ENCODE measurements at regions of chr10 and their contacts with region 1.

Region 1: GRCh38 chr10:119686439-119687191 is 35.4 kb downstream of the BAG3 start:
- DNase-seq: peak; percentile 98
- H3K4me3 ChIP-seq: peak overlapping the region in 1 of 3 experiments; percentile 28
- H3K27ac ChIP-seq: peak overlapping the region; percentile 38
- H3K4me1 ChIP-seq: peaks cover 35% of the 10 kb centered on the region
- H3K27me3 ChIP-seq: no peaks in the 10 kb centered on the region
- CTCF ChIP-seq: peak; percentile 76 to 85

Region 2: DNA sequence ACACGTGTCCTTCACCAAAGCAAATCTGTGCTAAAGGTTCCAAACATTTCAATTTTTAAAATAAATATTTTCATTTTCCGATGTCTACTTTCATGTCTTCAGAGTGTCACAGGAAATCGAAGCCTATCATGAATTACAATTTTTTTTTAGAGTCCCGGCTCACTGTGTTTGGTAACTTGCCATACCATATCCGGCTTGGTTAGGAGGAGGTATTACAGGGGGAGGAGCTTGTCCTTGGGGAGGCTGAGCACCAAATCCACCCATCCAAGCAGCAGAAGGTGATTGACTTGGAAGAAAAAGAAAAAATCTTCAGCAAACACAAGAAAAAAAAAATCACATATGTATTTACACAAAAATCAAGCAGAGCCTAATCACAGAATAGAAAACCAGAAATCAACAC is 111.1 kb before region 1 on chr10:
- CTCF ChIA-PET with region 1: no interaction called
- dilution Hi-C with region 1: no loop called
- in situ Hi-C with region 1: no loop called
- intact Hi-C with region 1: no loop called
- DNase-seq: peak; percentile 37
- H3K4me3 ChIP-seq: no peak overlapping the region
- H3K27ac ChIP-seq: no peak overlapping the region
- H3K4me1 ChIP-seq: no peaks in the 10 kb centered on the region
- H3K27me3 ChIP-seq: no peaks in the 10 kb centered on the region
- CTCF ChIP-seq: no peak

Region 3: GRCh38 chr10:119667562-119668328 is 18.9 kb before region 1 on chr10:
- CTCF ChIA-PET with region 1: interaction called, 3 read pairs
- dilution Hi-C with region 1: no loop called
- in situ Hi-C with region 1: no loop called
- intact Hi-C with region 1: loop called (anchors 1 kb)
- DNase-seq: peak; percentile 96
- H3K4me3 ChIP-seq: no peak overlapping the region
- H3K27ac ChIP-seq: peak overlapping the region; percentile 64
- H3K4me1 ChIP-seq: peaks cover 71% of the 10 kb centered on the region
- H3K27me3 ChIP-seq: no peaks in the 10 kb centered on the region
- CTCF ChIP-seq: peak in 1 of 2 donors; percentile 25

Region 4: GRCh38 chr10:119725828-119726675 is 39.4 kb after region 1 on chr10 and contains the start of gene INPP5F:
- CTCF ChIA-PET with region 1: no interaction called
- dilution Hi-C with region 1: no loop called
- in situ Hi-C with region 1: loop called in 1 of 2 experiments (anchors 10 kb)
- intact Hi-C with region 1: loop called (anchors 1 kb)
- DNase-seq: peak; percentile 98
- H3K4me3 ChIP-seq: peak within 1 kb of the TSS; percentile 76 to 95 (median 85)
- H3K27ac ChIP-seq: peak within 1 kb of the TSS; percentile 54
- H3K4me1 ChIP-seq: peaks cover 15% of the 10 kb centered on the region
- H3K27me3 ChIP-seq: no peaks in the 10 kb centered on the region
- CTCF ChIP-seq: peak in 1 of 2 donors; percentile 27
- total RNA-seq, gene INPP5F: 19.3 to 22.1 TPM

Region 5: GRCh38 chr10:119737827-119738226 is 51.2 kb after region 1 on chr10:
- CTCF ChIA-PET with region 1: no interaction called
- dilution Hi-C with region 1: no loop called
- in situ Hi-C with region 1: loop called in 1 of 2 experiments (anchors 10 kb)
- intact Hi-C with region 1: loop called (anchors 2 kb)
- DNase-seq: peak; percentile 84
- H3K4me3 ChIP-seq: peak overlapping the region in 2 of 3 experiments; percentile 20 to 25
- H3K27ac ChIP-seq: peak overlapping the region; percentile 79
- H3K4me1 ChIP-seq: peaks cover 41% of the 10 kb centered on the region
- H3K27me3 ChIP-seq: no peaks in the 10 kb centered on the region
- CTCF ChIP-seq: no peak

Region 6: GRCh38 chr10:119798736-119799135 is 112.1 kb after region 1 on chr10:
- CTCF ChIA-PET with region 1: no interaction called
- dilution Hi-C with region 1: no loop called
- in situ Hi-C with region 1: no loop called
- intact Hi-C with region 1: no loop called
- DNase-seq: no peak
- H3K4me3 ChIP-seq: no peak overlapping the region
- H3K27ac ChIP-seq: no peak overlapping the region
- H3K4me1 ChIP-seq: peaks cover 4% of the 10 kb centered on the region
- H3K27me3 ChIP-seq: no peaks in the 10 kb centered on the region
- CTCF ChIP-seq: no peak

Region 7: DNA sequence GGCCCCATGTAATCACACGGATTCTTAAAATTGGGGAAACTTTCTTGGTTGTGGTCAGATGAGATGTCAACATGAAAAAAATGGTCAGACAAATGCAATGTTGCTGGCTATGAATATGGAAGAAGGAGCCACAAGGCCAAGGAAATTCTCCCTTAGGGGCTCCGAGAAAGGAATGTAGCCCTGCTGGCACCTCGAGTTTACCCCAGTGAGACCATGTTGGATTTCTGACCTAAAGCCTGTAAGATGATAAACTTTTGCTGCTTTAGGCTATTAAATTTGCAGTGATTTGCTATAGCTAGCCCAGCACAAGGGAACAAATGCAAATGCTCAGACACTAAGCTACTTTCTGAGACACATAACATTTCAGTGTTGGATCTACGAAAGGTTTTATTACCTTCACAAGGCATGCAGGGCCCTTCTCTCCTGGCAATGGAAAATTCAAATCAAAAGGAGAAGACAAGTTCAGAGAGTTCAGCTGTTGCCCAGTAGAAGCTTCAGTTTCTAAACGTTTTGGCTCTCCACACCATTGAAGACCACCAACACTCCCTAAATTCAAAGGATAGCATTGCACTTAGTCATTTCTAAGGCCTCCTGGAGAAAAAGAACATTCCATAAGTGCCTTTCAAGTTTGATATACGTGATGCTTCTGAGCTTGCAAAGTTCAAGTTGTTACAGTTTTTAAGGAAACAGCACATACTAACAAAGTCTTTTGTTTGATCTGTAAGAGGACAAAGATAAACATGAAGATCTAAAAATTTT is 162.6 kb after region 1 on chr10:
- CTCF ChIA-PET with region 1: no interaction called
- dilution Hi-C with region 1: loop called (anchors 5 kb)
- in situ Hi-C with region 1: no loop called
- intact Hi-C with region 1: no loop called
- DNase-seq: no peak
- H3K4me3 ChIP-seq: no peak overlapping the region
- H3K27ac ChIP-seq: peak overlapping the region; percentile 43
- H3K4me1 ChIP-seq: peaks cover 13% of the 10 kb centered on the region
- H3K27me3 ChIP-seq: no peaks in the 10 kb centered on the region
- CTCF ChIP-seq: no peak

Region 8: DNA sequence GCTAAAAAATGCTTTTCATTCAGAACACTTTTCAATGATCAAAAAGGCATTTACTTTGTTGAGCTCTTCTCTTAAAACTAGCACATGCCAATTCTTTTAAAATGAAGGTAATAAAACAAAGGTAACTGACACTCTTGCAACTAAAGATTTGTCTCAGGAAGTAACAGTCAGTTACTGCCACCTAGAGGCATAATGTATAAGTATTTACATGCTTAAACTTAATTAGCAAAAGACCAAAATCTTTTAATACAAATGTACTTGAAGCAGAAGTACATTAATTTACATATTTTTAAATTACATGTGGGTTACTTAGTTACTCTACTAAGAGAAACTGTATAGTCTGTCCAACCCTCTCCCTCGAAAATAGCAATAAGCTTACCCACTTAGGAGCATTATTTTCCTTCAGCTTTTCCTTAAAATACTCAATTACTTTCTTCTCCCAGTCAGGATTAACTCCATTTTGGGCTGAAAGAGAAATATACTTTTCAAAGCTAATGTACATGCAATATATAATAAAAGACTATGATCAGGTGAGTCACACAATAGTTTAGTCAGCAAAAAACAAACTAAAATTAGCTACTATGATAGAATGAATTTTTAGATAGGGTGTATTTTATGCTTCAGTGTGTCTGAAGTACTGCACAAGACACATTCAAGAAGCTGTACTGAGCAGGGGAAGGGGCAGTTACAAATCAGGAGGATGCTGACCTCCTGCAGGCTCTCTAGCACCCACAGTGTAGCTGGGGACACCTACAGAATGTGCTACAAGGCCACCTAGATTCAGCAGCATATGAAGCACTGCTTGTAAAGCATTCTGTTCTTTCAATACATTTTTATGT is 173.0 kb after region 1 on chr10:
- CTCF ChIA-PET with region 1: no interaction called
- dilution Hi-C with region 1: no loop called
- in situ Hi-C with region 1: loop called in 1 of 2 experiments (anchors 10 kb)
- intact Hi-C with region 1: loop called (anchors 1 kb)
- DNase-seq: peak; percentile 27
- H3K4me3 ChIP-seq: no peak overlapping the region
- H3K27ac ChIP-seq: no peak overlapping the region
- H3K4me1 ChIP-seq: no peaks in the 10 kb centered on the region
- H3K27me3 ChIP-seq: no peaks in the 10 kb centered on the region
- CTCF ChIP-seq: peak; percentile 47 to 60